K562 (cell line): ENCODE measurements at regions of chr21 and their contacts with region 1.

Region 1: DNA sequence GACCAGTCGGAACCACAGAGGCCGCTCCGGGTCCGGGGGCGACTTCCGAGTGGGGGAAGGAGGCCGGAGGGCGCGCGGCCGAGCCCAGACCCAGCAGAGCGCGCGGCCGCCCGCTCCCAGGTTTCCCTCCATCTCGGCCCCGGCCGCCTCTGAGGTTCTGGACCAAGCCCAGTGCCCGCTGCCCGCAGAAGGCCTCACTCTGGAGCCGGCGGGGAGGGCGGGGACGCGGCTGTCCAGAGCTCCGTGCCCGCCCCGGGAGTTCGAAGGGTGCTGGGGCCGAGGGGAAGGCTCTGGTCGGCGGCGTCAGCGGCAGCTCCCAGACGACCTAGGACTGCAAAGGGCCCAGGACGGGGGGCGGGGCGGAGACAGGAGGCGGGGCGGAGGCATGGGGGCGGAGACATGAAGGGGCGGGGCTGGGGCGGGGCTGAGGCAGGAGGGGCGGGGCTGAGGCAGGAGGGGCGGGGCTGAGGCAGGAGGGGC is 48.0 kb upstream of the SLC19A1 start:
- DNase-seq: peak; percentile 76 to 97 (median 97)
- ATAC-seq: peak; percentile 84
- H3K4me3 ChIP-seq: peak overlapping the region; percentile 53
- H3K27ac ChIP-seq: no peak overlapping the region
- H3K4me1 ChIP-seq: peaks cover 23 to 42% of the 10 kb centered on the region in 2 experiments
- H3K27me3 ChIP-seq: peaks cover 0 to 4% of the 10 kb centered on the region in 2 experiments; a peak in 2 of 5 replicates
- CTCF ChIP-seq: no peak
- EP300 ChIP-seq: no peak
- POLR2A ChIP-seq: no peak
- RAD21 ChIP-seq: no peak

Region 2: GRCh38 chr21:45363921-45364467 is 226.3 kb before region 1 on chr21:
- CTCF ChIA-PET with region 1: no interaction called
- POLR2A ChIA-PET with region 1: no interaction called
- in situ Hi-C with region 1: no loop called
- intact Hi-C with region 1: loop called (anchors 5 kb)
- DNase-seq: peak; percentile 72 to 78 (median 76)
- ATAC-seq: peak; percentile 14
- H3K4me3 ChIP-seq: no peak overlapping the region
- H3K27ac ChIP-seq: peak overlapping the region; percentile 68; the same call in 2 of the 3 replicates
- H3K4me1 ChIP-seq: peaks cover 39 to 90% of the 10 kb centered on the region in 2 experiments
- H3K27me3 ChIP-seq: peaks cover 0 to 15% of the 10 kb centered on the region in 2 experiments; a peak in 1 of 5 replicates
- CTCF ChIP-seq: no peak
- EP300 ChIP-seq: no peak
- POLR2A ChIP-seq: no peak
- RAD21 ChIP-seq: no peak

Region 3: GRCh38 chr21:45525153-45526025 is 64.9 kb before region 1 on chr21:
- CTCF ChIA-PET with region 1: no interaction called
- POLR2A ChIA-PET with region 1: no interaction called
- in situ Hi-C with region 1: no loop called
- intact Hi-C with region 1: no loop called
- DNase-seq: no peak
- ATAC-seq: no peak
- H3K4me3 ChIP-seq: no peak overlapping the region
- H3K27ac ChIP-seq: no peak overlapping the region
- H3K4me1 ChIP-seq: peaks cover 0 to 11% of the 10 kb centered on the region in 2 experiments; a peak in 1 of 5 replicates
- H3K27me3 ChIP-seq: no peaks in the 10 kb centered on the region
- CTCF ChIP-seq: no peak
- EP300 ChIP-seq: no peak
- POLR2A ChIP-seq: no peak
- RAD21 ChIP-seq: no peak

Region 4: DNA sequence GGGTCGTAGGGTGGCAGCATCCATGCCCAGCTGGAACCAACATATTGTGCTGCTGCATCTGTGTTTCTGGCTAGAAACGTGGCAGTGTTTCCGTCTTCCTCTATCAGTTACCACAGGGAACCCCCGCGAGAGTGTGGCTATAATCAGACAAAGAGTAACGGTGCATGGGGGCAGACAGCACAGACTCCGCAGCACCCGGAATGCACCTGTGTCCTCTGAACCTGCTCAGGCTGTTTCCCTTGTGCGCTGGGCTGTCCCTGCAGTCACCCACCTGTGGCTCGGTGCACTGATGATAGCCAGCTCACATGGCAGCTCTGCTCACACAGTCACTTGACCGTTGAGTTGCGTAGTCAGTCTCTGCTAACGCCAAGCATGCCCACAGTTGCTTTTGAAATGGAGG is 41.9 kb after region 1 on chr21:
- CTCF ChIA-PET with region 1: no interaction called
- POLR2A ChIA-PET with region 1: no interaction called
- in situ Hi-C with region 1: no loop called
- intact Hi-C with region 1: no loop called
- DNase-seq: no peak
- ATAC-seq: no peak
- H3K4me3 ChIP-seq: no peak overlapping the region
- H3K27ac ChIP-seq: no peak overlapping the region
- H3K4me1 ChIP-seq: peaks cover 0 to 4% of the 10 kb centered on the region in 2 experiments; a peak in 1 of 5 replicates
- H3K27me3 ChIP-seq: peaks cover 31 to 51% of the 10 kb centered on the region in 2 experiments
- CTCF ChIP-seq: no peak
- EP300 ChIP-seq: no peak
- POLR2A ChIP-seq: no peak
- RAD21 ChIP-seq: no peak

Region 5: GRCh38 chr21:45643021-45643980 is 53.0 kb after region 1 on chr21 and contains the start of gene PCBP3:
- CTCF ChIA-PET with region 1: no interaction called
- POLR2A ChIA-PET with region 1: interaction called, 5 read pairs
- in situ Hi-C with region 1: no loop called
- intact Hi-C with region 1: loop called (anchors 1 kb)
- DNase-seq: peak; percentile 96 to 99 (median 98)
- ATAC-seq: peak; percentile 97
- H3K4me3 ChIP-seq: peak within 1 kb of the TSS; percentile 43
- H3K27ac ChIP-seq: no peak within 1 kb of the TSS
- H3K4me1 ChIP-seq: peaks cover 0 to 28% of the 10 kb centered on the region in 2 experiments; a peak in 2 of 5 replicates
- H3K27me3 ChIP-seq: peaks cover 10 to 12% of the 10 kb centered on the region in 2 experiments; a peak in 3 of 5 replicates
- CTCF ChIP-seq: no peak
- EP300 ChIP-seq: no peak
- POLR2A ChIP-seq: no peak
- RAD21 ChIP-seq: no peak
- polyA plus RNA-seq, gene PCBP3: not detected

Region 6: GRCh38 chr21:45680215-45680614 is 89.9 kb after region 1 on chr21:
- CTCF ChIA-PET with region 1: no interaction called
- POLR2A ChIA-PET with region 1: no interaction called
- in situ Hi-C with region 1: no loop called
- intact Hi-C with region 1: no loop called
- DNase-seq: no peak
- ATAC-seq: no peak
- H3K4me3 ChIP-seq: no peak overlapping the region
- H3K27ac ChIP-seq: no peak overlapping the region
- H3K4me1 ChIP-seq: no peaks in the 10 kb centered on the region
- H3K27me3 ChIP-seq: no peaks in the 10 kb centered on the region
- CTCF ChIP-seq: no peak
- EP300 ChIP-seq: no peak
- POLR2A ChIP-seq: no peak
- RAD21 ChIP-seq: no peak